ENCODE measurements at regions of chr17 and their contacts with region 1.

Region 1: GRCh38 chr17:7544911-7545310 is 3.9 kb upstream of the TNFSF12 start:
- DNase-seq: no peak

Region 2: DNA sequence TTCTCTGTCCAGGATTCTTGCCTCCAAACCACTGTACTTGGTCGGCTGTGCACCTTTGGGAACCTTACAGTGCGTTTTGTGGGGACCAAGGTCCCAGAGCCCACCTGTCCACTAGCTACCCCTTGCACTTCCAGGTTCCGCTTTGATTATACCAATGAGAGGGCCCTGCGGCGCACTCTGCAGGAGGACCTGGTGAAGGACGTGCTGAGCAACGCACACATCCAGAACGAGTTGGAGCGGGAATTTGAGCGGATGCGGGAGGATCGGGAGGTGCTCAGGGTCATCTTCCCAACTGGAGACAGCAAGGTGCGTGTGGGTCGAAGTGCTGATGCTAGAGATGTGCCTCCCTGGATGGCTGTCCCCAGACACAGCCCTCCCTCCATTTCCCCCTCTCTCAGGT is 41.9 kb before region 1 on chr17:
- intact Hi-C with region 1: loop called in 1 of 2 experiments (anchors 5 kb)
- DNase-seq: no peak

Region 3: DNA sequence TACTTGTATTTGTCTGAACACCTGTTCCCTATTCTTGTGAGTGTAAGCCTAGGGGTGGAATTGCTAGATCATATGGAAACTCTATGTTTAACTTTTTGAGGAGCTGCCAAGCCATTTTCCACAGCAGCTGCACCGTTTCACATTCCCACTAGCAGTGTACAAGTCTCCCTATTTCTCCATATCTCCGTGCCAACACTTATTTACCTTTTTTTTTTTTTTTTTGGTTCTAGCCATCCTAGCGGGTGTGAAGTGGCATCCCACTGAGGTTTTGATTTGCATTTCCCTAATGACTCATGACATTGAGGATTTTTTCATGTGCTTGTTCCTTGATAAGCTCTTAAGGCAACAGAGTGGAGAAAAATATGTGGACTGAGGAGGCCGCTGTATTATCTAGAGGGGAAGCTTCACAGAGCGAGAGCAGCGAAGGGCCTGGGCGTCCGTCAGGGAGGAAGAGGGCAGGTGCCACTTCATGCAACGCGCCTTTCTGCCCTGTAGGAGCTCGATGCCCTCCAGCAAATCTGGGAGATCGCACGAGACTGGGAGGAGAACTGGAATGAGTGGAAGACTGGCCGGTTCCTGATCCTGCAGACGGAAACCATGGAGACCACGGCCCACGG is 222.6 kb after region 1 on chr17:
- intact Hi-C with region 1: no loop called
- DNase-seq: no peak